T-cell (primary cell): ENCODE measurements at regions of chrX and their contacts with region 1.

Region 1: DNA sequence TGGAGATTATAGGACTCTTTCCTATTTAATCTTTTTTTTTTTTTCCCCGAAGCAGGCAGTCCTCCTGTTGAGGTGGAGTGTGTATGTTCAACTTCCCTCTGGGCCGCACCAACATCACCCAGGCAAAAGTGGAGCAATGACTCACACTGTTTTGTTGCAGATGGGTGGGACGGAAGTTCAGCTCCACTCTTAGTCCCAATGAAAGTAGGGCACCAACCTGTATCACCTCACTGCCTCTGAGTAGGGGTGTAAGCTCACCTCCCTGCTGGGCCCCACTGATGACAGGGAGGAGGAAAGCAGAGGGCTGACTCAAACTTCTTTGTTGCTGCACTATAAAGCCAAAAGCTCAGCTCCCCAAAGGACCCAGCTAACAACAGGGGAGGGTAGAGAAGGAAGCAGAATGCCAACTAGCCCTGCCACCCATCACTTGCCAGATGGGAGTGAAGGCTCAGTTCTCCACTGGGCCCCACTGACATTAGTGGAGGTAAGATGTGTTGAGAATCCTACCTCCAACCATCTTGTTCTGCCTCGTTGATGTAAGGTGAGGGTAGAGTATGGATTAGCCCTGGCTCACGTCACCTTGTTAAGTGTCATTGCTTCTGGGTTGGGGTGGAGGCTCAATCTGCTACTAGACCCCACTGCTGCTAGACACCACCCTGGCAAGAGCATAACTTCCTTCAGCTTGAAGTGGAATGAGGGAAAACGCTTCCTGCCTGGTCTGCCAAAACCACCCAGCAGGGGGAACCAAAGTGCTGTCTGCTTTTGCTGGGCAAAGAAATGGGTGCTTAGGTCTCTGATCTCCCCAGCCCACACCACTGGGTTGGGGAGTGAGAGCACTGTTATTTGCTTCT is 14.1 kb downstream of the RPS6KA3 start:
- DNase-seq: peak; percentile 35 to 85 (median 64)
- ATAC-seq: peak; percentile 73 to 88 (median 81)
- H3K4me3 ChIP-seq: no peak overlapping the region
- H3K4me3 Mint-ChIP-seq: no peak overlapping the region
- H3K27ac ChIP-seq: peak overlapping the region; percentile 61
- H3K27ac Mint-ChIP-seq: peak overlapping the region; percentile 68 to 93
- H3K4me1 ChIP-seq: peaks cover 8 to 16% of the 10 kb centered on the region in 2 experiments
- H3K4me1 Mint-ChIP-seq: peaks cover 43 to 67% (median 65%) of the 10 kb centered on the region in 3 donors
- H3K27me3 ChIP-seq: no peaks in the 10 kb centered on the region
- H3K27me3 Mint-ChIP-seq: peaks cover 0 to 4% of the 10 kb centered on the region in 2 donors

Region 2: DNA sequence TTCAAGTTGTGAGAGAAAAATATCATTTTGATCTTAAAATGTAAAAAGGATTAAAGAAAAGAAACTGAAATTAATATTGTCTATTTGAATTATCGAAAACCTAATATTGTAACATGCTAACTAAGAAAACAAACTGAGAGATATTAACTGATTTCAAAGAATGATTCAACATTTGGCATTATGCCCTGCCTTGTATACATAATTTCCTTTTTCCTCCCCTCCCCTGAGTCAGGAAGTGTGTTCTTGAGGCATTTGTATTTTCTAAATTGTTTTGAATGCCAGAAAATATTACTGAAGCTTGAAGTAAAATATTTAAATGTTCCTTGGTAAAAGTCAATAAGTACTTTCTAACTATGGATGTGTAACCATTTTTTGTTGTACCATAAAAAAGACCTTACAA is 35.3 kb before region 1 on chrX:
- CTCF ChIA-PET with region 1: interaction called, 5 to 12 read pairs
- POLR2A ChIA-PET with region 1: no interaction called
- DNase-seq: peak in 1 of 35 experiments; percentile 41
- ATAC-seq: peak in 1 of 4 experiments; percentile 35
- H3K4me3 ChIP-seq: no peak overlapping the region
- H3K4me3 Mint-ChIP-seq: no peak overlapping the region
- H3K27ac ChIP-seq: no peak overlapping the region
- H3K27ac Mint-ChIP-seq: no peak overlapping the region
- H3K4me1 ChIP-seq: peaks cover 0 to 2% of the 10 kb centered on the region in 2 experiments
- H3K4me1 Mint-ChIP-seq: peaks cover 63 to 68% (median 64%) of the 10 kb centered on the region in 3 donors
- H3K27me3 ChIP-seq: no peaks in the 10 kb centered on the region
- H3K27me3 Mint-ChIP-seq: peaks cover 0 to 12% of the 10 kb centered on the region in 2 donors

Region 3: GRCh38 chrX:20445109-20445508 is 192.5 kb after region 1 on chrX:
- CTCF ChIA-PET with region 1: interaction called in 1 of 2 experiments, 10 read pairs
- POLR2A ChIA-PET with region 1: interaction called in 1 of 2 experiments, 3 read pairs
- DNase-seq: no peak
- ATAC-seq: peak in 1 of 4 experiments; percentile 43
- H3K4me3 ChIP-seq: no peak overlapping the region
- H3K4me3 Mint-ChIP-seq: peak overlapping the region in 1 of 3 donors; percentile 5
- H3K27ac ChIP-seq: peak overlapping the region; percentile 34
- H3K27ac Mint-ChIP-seq: peak overlapping the region; percentile 12 to 78
- H3K4me1 ChIP-seq: peaks cover 13 to 14% of the 10 kb centered on the region in 2 experiments
- H3K4me1 Mint-ChIP-seq: peaks cover 39 to 57% (median 44%) of the 10 kb centered on the region in 3 donors
- H3K27me3 ChIP-seq: no peaks in the 10 kb centered on the region
- H3K27me3 Mint-ChIP-seq: peaks cover 0 to 8% of the 10 kb centered on the region in 2 donors